PC-9 (cell line): ENCODE measurements at regions of chr5 and their contacts with region 1.

Region 1: GRCh38 chr5:80268916-80269315 is 13.1 kb upstream of the SERINC5 start:
- DNase-seq: no peak
- H3K4me3 ChIP-seq: no peak overlapping the region
- H3K27ac ChIP-seq: no peak overlapping the region
- H3K4me1 ChIP-seq: peaks cover 22% of the 10 kb centered on the region
- H3K27me3 ChIP-seq: no peaks in the 10 kb centered on the region
- CTCF ChIP-seq: no peak

Region 2: GRCh38 chr5:79795790-79796398 is 473.0 kb before region 1 on chr5:
- CTCF ChIA-PET with region 1: no interaction called
- POLR2A ChIA-PET with region 1: no interaction called
- intact Hi-C with region 1: no loop called
- DNase-seq: peak in 1 of 2 experiments; percentile 26
- H3K4me3 ChIP-seq: no peak overlapping the region
- H3K27ac ChIP-seq: no peak overlapping the region
- H3K4me1 ChIP-seq: no peaks in the 10 kb centered on the region; the same call in 1 of the 2 replicates
- H3K27me3 ChIP-seq: no peaks in the 10 kb centered on the region
- CTCF ChIP-seq: no peak

Region 3: GRCh38 chr5:80101993-80102392 is 166.9 kb before region 1 on chr5:
- CTCF ChIA-PET with region 1: no interaction called
- POLR2A ChIA-PET with region 1: interaction called, 28 read pairs
- intact Hi-C with region 1: no loop called
- DNase-seq: no peak
- H3K4me3 ChIP-seq: no peak overlapping the region
- H3K27ac ChIP-seq: no peak overlapping the region
- H3K4me1 ChIP-seq: no peaks in the 10 kb centered on the region
- H3K27me3 ChIP-seq: no peaks in the 10 kb centered on the region
- CTCF ChIP-seq: no peak

Region 4: DNA sequence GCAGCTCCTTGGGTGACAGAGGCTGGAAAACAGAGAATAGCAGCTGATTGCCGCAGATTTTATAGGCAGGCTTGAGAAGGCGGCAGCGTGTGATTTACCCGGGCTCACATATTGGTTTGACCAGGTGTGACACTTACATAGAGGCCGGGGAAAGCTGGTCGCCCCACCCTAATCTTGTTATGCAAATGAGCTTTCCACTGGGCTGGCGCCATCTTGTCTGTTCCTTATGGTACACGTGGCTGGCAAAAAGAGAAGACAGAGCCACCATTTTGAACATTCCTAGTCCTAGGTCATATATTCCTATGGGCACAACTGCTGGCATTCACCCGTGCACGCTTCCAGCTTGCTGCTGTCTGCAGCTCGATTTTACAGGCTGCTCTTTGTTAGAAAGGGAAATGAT is 39.6 kb after region 1 on chr5:
- CTCF ChIA-PET with region 1: no interaction called
- POLR2A ChIA-PET with region 1: interaction called, 12 read pairs
- intact Hi-C with region 1: no loop called
- DNase-seq: no peak
- H3K4me3 ChIP-seq: no peak overlapping the region
- H3K27ac ChIP-seq: no peak overlapping the region
- H3K4me1 ChIP-seq: no peaks in the 10 kb centered on the region
- H3K27me3 ChIP-seq: no peaks in the 10 kb centered on the region
- CTCF ChIP-seq: no peak